ENCODE measurements at regions of chr2 and their contacts with region 1.

Region 1: GRCh38 chr2:52386433-52387030 is 1354.6 kb upstream of the NRXN1 start:
- DNase-seq: no peak
- H3K4me3 ChIP-seq: no peak overlapping the region
- CTCF ChIP-seq: no peak
- POLR2A ChIP-seq: no peak

Region 2: DNA sequence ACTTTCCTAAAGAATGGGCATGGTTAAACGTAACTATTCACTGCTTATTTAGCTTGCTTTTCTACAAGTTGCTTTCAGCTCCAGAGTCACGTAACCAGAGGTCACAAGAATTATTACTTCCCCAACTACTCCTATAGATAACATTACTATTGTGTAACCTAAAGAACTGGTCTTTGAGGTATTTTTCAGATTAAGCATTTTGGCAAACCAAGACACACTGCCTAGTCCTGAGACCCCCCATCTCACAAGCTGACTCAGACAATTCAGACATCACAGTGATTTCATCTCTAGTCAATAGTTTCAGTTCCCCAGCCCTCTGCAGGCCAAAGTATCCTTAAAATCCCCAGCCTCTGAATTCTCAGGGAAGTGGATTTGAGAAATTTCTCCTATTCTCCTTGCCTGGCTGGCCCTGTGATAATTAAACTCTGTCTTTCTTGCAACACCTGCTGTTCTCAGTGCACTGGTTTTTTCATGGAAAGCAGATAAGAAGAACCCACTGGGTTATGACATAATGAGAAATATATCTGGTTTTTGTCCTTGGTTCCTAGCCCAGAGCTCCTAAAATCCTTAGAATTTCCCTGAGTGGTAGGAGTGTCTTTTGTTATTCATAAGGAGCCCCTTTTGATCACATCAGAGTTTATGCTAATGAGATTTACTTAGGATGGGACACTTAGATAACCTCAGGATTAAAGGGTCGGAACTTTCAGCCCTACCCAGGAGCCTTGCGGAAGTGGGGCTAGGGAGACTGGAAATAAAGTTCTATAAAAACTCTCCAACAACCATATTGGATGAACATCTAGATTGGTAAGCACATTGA is 70.2 kb after region 1 on chr2:
- intact Hi-C with region 1: loop called (anchors 5 kb)
- DNase-seq: no peak
- H3K4me3 ChIP-seq: no peak overlapping the region
- CTCF ChIP-seq: no peak
- POLR2A ChIP-seq: no peak

Measured in lower leg skin (tissue), 4 donors.